PC-9 (cell line): ENCODE measurements at regions of chr19 and their contacts with region 1.

Region 1: GRCh38 chr19:37953533-37954303 is 46.7 kb downstream of the SIPA1L3 start:
- DNase-seq: peak in 1 of 2 experiments; percentile 54
- H3K4me3 ChIP-seq: no peak overlapping the region
- H3K27ac ChIP-seq: peak overlapping the region; percentile 33
- H3K4me1 ChIP-seq: peaks cover 19% of the 10 kb centered on the region
- H3K27me3 ChIP-seq: no peaks in the 10 kb centered on the region
- CTCF ChIP-seq: no peak

Region 2: GRCh38 chr19:37997911-37998344 is 44.2 kb after region 1 on chr19:
- CTCF ChIA-PET with region 1: no interaction called
- POLR2A ChIA-PET with region 1: no interaction called
- intact Hi-C with region 1: no loop called
- DNase-seq: peak in 1 of 2 experiments; percentile 77
- H3K4me3 ChIP-seq: no peak overlapping the region
- H3K27ac ChIP-seq: peak overlapping the region; percentile 24; the same call in 1 of the 2 replicates
- H3K4me1 ChIP-seq: peaks cover 7% of the 10 kb centered on the region
- H3K27me3 ChIP-seq: no peaks in the 10 kb centered on the region
- CTCF ChIP-seq: no peak

Region 3: DNA sequence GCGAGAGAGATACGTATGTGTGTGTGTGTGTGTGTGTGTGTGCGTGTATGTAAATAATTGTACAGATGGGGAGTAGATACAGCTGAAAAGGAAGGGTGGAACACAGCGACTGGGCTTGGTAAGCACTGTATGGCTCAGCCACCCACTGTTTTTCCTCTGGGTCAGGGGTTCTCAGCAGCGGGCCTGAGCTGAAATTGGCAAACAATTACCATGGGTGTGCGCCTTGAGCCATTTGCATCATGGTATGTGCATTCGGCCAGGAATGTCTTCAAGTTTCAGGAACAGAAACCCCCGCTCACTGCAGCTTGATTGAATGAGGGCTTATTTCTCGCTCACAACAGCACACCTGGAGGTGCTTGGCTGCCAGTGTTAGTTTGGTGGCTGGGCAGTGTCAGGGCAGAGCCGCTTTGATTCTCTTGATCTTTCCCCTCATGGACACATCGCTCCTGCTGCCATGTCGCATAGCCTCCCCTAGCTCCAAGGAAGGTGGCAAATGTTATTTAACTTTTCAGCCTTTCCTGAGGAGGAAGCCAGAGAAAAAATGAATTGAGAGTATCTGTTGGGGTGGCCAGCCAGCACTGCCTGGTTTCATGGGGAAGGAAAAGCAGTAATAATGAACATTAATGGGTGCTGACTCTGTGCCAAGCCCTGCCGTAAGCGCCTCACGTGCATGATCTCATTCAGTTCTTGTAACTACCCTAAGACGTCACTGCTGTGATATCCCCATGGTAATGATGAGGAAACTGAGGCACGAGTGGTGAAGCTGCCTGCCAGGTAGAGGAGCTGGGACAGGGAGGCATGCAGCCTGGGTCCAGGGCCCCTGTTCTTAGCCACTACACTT is 80.2 kb after region 1 on chr19:
- CTCF ChIA-PET with region 1: no interaction called
- POLR2A ChIA-PET with region 1: interaction called, 13 read pairs
- intact Hi-C with region 1: no loop called
- DNase-seq: no peak
- H3K4me3 ChIP-seq: no peak overlapping the region
- H3K27ac ChIP-seq: no peak overlapping the region
- H3K4me1 ChIP-seq: no peaks in the 10 kb centered on the region
- H3K27me3 ChIP-seq: no peaks in the 10 kb centered on the region
- CTCF ChIP-seq: no peak

Region 4: DNA sequence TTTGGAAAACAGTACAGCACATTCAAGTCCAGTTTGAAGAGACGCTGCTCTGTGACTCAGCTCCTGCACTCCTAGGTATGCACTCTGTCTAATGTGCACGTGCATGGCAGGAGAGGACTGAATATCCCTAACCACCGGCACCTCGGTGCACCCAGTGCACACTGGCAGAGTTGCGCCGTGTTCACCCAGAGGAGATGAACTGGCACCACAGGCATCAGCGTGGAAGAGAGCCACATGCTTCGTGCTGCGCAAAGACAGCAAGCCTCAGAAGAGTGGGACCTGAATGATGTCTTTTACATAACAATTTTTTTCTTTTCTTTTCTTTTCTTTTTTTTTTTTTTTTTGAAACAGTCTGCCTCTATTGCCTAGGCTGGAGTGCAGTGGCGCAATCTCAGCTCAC is 148.0 kb after region 1 on chr19:
- CTCF ChIA-PET with region 1: no interaction called
- POLR2A ChIA-PET with region 1: interaction called, 15 read pairs
- intact Hi-C with region 1: no loop called
- DNase-seq: no peak
- H3K4me3 ChIP-seq: no peak overlapping the region
- H3K27ac ChIP-seq: no peak overlapping the region
- H3K4me1 ChIP-seq: no peaks in the 10 kb centered on the region
- H3K27me3 ChIP-seq: no peaks in the 10 kb centered on the region
- CTCF ChIP-seq: no peak